RWPE1 (cell line): ENCODE measurements at regions of chr15 and their contacts with region 1.

Region 1: DNA sequence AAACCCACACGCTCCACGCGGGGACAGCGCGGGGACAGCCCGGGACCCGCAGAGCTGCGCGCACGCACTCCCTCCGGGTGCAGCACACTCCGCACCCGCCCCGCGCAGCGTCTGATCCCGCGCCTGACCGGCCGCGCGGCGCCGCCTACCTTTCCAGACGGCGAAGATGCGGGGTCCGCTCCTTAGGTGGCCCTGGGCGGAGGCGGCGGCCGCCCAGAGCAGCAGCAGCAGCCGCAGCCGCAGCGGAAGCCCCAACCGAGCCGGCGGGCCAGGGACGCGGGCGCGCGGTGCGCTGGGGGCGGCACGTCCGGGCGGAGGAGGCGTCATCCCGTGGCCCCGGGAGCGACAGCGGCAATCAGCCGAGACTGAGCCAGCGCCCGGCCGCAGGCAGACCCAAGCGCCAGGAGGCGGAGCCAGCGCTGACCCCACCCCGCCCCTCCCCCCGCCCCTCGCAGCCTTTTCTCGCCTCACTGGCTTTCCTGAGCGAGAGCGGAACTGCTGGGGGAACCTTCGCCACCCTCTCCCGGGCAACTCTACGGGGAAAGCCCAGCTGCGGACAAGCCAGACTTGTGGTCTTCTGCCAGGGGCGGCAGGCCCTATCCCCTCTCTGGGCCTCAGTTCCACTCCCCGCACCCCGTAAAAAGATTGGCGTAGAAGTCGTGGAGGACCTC is at the start of gene SEMA7A:
- DNase-seq: peak; percentile 95
- H3K27ac ChIP-seq: peak within 1 kb of the TSS; percentile 44
- CTCF ChIP-seq: no peak

Region 2: DNA sequence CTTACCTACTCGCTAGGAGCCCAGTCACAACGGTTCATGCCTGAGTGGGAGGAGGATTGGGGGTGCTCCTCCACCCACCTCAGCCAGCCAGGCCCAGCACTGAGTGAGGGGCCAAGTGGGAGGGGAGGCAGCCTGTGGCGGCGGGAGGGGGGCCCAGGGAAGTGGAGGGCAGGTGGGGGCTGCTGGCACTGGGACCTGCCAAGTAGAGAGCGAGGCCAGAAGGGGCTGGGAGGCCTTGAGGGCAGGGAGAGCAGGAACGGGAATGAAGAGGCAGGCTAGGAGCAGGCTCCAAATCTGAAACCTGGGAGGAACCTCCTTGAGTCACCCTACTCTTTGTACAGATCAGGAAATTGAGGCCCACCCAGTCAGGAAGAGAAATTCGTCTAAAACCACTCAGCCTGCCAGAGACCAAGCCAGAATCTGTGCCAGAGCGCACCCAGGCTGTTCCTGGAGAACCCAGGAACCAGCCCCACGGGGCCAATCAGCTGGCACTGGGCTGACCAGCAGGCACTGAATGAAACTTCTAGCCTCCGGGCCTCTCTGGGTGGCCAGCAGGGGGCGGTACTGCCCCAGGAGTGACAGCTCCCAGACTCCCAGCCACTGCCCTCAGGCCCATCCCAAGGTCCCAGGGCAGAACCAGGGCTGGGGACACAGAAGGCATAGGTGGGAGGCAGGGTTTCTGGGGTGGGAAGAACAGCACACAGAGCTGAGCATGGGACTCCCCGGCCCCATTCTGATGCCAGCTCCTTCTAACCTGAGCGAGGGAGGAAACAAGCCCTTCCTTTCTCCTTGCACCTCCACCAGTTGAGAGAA is 51.5 kb before region 1 on chr15:
- CTCF ChIA-PET with region 1: interaction called, 29 read pairs
- POLR2A ChIA-PET with region 1: interaction called, 8 read pairs
- DNase-seq: peak; percentile 93
- H3K27ac ChIP-seq: peak overlapping the region; percentile 47
- CTCF ChIP-seq: peak; percentile 89